Heart left ventricle (tissue), 16 donors: ENCODE measurements at regions of chr19 and their contacts with region 1.

Region 1: DNA sequence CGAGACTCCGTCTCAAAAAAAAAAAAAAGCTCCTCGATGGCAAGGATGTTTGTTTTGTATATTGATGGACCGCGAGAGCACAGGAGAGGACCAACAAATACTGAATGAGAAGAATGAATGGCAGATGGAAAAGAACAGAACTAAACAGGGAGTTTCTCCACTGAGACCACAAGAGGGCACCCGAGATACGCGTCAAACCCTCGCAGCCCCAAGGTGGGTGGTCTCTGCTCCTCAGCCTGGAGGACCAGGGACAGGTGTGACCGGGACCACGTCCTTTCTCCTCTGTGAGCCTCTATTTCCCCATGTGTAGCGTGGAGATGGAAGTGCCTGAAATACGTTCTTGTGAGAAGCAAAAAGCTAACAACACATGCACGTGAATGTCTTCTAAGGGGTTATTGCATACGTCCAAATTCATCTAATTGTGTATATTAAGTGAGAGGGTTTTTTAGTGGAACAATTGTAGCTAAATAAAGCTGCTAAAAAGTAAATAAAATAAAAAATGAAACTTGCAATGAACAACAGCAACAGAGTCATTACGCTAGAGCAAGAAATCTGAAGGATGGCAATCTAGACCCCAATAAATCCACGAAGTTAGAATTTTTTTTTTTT is 8.3 kb upstream of the CDC42EP5 start:
- DNase-seq: peak in 1 of 5 donors; percentile 33
- ATAC-seq: peak in 2 of 4 donors; percentile 32 to 58
- H3K4me3 ChIP-seq: no peak overlapping the region
- H3K27ac ChIP-seq: no peak overlapping the region
- H3K4me1 ChIP-seq: peaks cover 0 to 17% (median 0%) of the 10 kb centered on the region in 12 donors
- H3K27me3 ChIP-seq: peaks cover 0 to 50% (median 10%) of the 10 kb centered on the region in 9 donors
- CTCF ChIP-seq: peak; percentile 31 to 77 (median 62)
- POLR2A ChIP-seq: no peak

Region 2: DNA sequence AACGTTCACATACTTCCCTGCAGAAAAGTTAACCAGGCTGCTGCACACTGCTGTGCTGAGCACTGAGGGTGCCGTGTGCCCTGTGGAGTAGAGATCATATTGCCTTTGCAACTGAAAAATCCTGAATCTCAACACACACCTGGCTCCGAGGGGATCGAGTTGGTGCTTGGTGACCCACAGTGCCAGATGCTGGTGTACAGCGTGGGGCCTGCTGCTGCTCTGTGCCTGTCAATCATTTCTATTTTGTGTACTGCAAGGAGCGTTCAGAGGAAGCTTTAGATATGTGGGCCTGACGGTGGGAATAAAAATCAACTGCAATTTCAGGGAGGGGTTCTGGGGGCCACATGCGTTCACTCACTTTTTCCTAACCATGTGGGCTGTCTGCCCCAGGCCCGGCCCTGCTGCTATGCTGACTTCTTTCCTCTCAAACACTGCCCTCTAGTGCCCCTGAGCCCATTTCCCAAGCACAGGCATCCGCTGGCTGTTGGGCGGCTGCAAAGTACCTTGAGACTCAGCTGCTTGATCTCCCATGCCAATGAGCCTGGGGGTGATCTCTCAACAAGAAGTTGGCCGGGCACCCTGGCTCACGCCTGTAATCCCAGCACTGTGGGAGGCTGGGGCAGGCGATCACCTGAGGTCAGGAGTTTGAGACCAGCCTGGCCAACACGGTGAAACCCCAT is 42.1 kb before region 1 on chr19:
- intact Hi-C with region 1: loop called in 1 of 10 experiments (anchors 5 kb)
- DNase-seq: peak in 2 of 5 donors; percentile 33 to 57
- ATAC-seq: peak in 3 of 4 donors; percentile 41 to 57 (median 55)
- H3K4me3 ChIP-seq: no peak overlapping the region
- H3K27ac ChIP-seq: no peak overlapping the region
- H3K4me1 ChIP-seq: peaks cover 0 to 37% (median 12%) of the 10 kb centered on the region in 12 donors
- H3K27me3 ChIP-seq: no peaks in the 10 kb centered on the region
- CTCF ChIP-seq: peak in 9 of 12 donors; percentile 7 to 51 (median 27)
- POLR2A ChIP-seq: no peak

Region 3: GRCh38 chr19:54630782-54631181 is 149.4 kb after region 1 on chr19:
- intact Hi-C with region 1: no loop called
- DNase-seq: no peak
- ATAC-seq: peak in 2 of 4 donors; percentile 25 to 31
- H3K4me3 ChIP-seq: peak overlapping the region in 5 of 12 donors; percentile 15 to 57 (median 22)
- H3K27ac ChIP-seq: peak overlapping the region in 1 of 12 donors; percentile 81
- H3K4me1 ChIP-seq: peaks cover 0 to 7% (median 0%) of the 10 kb centered on the region in 12 donors
- H3K27me3 ChIP-seq: peaks cover 0 to 36% (median 6%) of the 10 kb centered on the region in 9 donors
- CTCF ChIP-seq: no peak
- POLR2A ChIP-seq: no peak

Region 4: DNA sequence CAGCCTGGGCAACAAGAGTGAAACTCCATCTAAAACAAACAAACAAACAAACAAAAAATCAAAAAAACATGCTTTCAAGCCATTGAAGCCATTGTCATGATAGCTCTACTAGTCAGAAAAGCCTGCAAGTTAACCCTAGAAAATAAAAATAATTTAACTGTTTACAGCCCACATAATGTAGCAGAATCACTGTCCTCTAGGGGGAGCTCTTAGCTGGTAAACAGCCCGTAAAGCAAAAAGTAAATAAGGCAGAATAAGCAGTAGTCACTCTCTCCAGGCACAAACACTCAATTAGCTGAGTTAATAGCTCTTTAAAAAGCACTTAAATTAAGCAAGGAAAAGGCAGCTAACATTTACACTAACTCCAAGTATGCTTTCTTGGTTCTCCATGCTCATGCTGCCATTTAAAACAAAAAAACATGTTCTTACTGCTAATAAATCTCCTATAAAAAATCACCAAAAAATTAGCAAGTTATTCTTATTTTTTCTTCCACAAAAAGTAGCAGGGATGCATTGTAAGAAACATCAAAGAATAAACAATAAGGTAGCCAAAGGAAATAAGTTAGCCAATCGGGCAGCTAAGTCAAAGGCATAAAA is 192.7 kb after region 1 on chr19:
- intact Hi-C with region 1: loop called (anchors 2 to 10 kb)
- DNase-seq: no peak
- ATAC-seq: no peak
- H3K4me3 ChIP-seq: no peak overlapping the region
- H3K27ac ChIP-seq: no peak overlapping the region
- H3K4me1 ChIP-seq: peaks cover 0 to 16% (median 0%) of the 10 kb centered on the region in 12 donors
- H3K27me3 ChIP-seq: peaks cover 0 to 30% (median 0%) of the 10 kb centered on the region in 9 donors
- CTCF ChIP-seq: peak; percentile 38 to 66 (median 56)
- POLR2A ChIP-seq: no peak